H1 (cell line): ENCODE measurements at regions of chr6 and their contacts with region 1.

Region 1: DNA sequence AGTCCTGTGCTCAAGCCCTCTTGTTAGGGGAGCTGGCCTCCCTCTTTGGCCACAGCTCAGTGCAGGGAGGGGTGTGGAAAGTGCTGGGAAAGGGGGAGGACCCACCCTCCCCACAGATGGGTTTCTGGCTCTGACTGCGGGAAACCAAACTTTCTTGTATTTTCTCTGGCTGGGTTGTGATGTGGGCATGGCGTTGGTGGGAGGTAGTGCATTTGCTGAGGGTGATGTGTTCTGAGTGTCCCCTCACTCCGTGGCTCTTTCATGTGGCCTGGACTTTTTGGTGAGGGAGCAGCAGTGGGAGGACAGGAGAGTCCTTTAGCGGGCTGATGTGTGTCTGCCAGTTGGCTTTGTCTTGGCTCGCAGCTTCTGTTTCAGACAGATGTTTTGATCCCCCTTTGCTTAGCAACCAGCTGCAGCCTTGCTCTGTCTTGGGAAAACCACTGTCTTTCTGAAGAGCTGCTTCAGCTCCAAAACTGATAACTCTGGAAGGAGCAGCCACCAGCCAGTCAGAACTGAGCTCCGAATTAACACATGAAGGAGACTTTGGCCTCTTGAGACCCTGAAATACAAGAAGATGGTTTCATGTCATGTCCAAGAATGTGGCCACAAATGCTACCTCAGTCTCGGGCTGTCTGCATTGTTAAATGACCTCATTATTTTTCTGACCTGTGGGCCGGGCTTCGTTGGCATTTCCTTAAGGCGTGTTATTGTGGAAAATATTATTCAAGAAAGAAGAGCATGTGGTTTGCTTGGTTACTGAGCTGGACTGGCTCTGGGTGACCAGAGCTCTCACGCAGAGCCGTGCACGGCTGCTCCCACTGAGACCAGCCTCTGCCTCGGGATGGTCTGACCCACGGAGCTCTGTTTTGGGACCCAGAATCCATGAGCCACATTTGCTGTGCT is 21.5 kb downstream of the SYNJ2 start:
- DNase-seq: no peak
- H3K4me3 ChIP-seq: no peak overlapping the region
- H3K27ac ChIP-seq: no peak overlapping the region
- H3K4me1 ChIP-seq: peaks cover 4 to 15% (median 6%) of the 10 kb centered on the region in 4 experiments
- H3K27me3 ChIP-seq: no peaks in the 10 kb centered on the region
- CTCF ChIP-seq: no peak
- EP300 ChIP-seq: no peak
- POLR2A ChIP-seq: no peak
- RAD21 ChIP-seq: no peak

Region 2: GRCh38 chr6:157989541-157990289 is 13.5 kb before region 1 on chr6:
- CTCF ChIA-PET with region 1: interaction called, 11 read pairs
- POLR2A ChIA-PET with region 1: interaction called, 5 read pairs
- DNase-seq: no peak
- H3K4me3 ChIP-seq: no peak overlapping the region
- H3K27ac ChIP-seq: no peak overlapping the region
- H3K4me1 ChIP-seq: peaks cover 11 to 26% (median 19%) of the 10 kb centered on the region in 4 experiments
- H3K27me3 ChIP-seq: no peaks in the 10 kb centered on the region
- CTCF ChIP-seq: peak in 2 of 3 experiments; percentile 3 to 9; a peak in 2 of 4 replicates
- EP300 ChIP-seq: no peak
- POLR2A ChIP-seq: 0 out of 3 replicates have a peak, but pooled peaks of 1 of the 2 experiments have one; percentile 4
- RAD21 ChIP-seq: peak in 1 of 2 experiments; percentile 15; a peak in 1 of 4 replicates